ENCODE measurements at regions of chrX and their contacts with region 1.

Region 1: GRCh38 chrX:9482408-9482807 is 17.6 kb downstream of the TBL1X start:
- DNase-seq: peak; percentile 3
- H3K27ac ChIP-seq: no peak overlapping the region
- CTCF ChIP-seq: no peak

Region 2: DNA sequence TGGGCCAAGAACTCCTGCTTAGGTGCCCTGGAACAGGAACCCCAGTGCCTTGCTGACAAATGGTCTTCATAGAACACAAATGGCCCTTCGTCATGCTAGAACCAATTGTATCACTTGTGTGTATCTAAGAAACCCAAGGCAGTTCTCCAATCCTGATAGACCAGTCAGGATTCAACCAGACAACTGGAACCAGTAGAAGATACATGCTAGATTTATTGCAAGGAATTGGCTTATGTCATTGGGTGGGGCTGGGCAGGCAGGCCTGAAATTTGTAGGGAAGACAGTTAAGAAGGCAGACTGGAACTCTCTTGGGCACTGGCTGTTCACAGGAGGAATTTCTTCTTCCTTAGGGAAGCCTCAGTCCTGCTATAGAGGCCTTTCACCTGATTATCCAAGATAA is 34.5 kb before region 1 on chrX:
- CTCF ChIA-PET with region 1: no interaction called
- POLR2A ChIA-PET with region 1: interaction called, 10 read pairs
- DNase-seq: no peak
- H3K27ac ChIP-seq: no peak overlapping the region
- CTCF ChIP-seq: no peak

Region 3: GRCh38 chrX:9604111-9604907 is 121.9 kb after region 1 on chrX:
- CTCF ChIA-PET with region 1: no interaction called
- POLR2A ChIA-PET with region 1: no interaction called
- DNase-seq: no peak
- H3K27ac ChIP-seq: no peak overlapping the region
- CTCF ChIP-seq: no peak